GM10248 (cell line): ENCODE measurements at regions of chr2 and their contacts with region 1.

Region 1: DNA sequence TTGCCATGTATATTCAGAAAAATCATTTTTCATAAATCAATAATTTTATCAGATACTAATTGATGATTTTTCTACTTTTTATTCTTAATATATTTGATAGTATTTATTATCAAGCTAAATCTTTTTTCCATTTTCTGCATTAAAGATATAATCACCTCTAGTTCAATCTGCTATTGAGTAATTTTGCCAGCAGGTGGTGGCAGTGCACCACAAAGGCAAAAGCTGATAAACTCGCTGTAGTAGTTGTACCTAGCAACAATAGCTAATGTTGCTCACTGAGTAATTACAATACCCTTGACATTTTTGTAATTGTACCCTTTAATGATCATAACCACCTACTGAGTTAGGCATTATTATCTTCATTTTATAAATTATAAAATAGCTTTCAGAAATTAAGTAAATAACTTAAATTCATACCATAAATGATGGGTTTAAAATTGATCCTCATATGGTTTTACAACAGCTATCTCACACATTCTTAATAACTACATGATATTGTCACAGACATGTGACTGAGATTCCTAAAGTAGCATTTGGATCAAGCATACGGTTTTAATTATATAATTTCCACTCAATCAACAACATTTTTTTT is 52.0 kb upstream of the CALCRL start:
- DNase-seq: peak; percentile 26
- CTCF ChIP-seq: peak; percentile 80

Region 2: DNA sequence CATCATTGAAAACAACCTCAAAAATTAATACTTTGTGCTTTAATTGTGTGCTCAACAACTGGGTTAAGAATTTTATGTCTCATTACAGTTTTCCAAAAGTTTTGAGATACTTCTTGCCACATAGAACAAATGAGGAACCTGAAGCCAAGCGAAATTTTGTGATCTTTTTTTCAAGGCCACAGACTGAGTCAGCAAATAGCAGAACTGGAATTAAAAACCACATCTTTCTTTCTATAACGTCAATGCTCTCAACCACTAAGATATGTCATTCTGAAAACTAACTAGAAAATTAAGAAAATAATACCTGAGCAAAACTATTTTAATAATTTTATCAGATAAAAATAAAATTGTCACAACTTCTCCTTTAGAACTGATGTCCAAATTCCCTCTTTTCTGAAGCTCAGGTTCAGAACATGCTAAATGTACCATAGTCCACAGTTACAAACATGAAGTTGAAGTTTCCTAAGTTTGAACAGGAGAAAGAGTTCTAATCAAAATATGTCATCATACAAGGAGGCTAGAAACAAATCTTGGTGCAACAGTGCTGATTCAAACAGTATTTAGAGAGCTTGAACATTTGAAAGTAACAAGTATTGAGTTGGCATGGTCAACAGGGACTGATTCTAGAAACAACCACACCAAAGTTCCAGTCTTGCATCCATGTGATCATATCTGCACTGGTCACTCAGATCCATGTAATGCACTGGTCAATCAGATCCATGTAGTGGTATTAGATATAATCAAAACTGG is 24.4 kb before region 1 on chr2:
- CTCF ChIA-PET with region 1: interaction called, 10 read pairs
- POLR2A ChIA-PET with region 1: no interaction called
- DNase-seq: no peak
- CTCF ChIP-seq: no peak

Region 3: DNA sequence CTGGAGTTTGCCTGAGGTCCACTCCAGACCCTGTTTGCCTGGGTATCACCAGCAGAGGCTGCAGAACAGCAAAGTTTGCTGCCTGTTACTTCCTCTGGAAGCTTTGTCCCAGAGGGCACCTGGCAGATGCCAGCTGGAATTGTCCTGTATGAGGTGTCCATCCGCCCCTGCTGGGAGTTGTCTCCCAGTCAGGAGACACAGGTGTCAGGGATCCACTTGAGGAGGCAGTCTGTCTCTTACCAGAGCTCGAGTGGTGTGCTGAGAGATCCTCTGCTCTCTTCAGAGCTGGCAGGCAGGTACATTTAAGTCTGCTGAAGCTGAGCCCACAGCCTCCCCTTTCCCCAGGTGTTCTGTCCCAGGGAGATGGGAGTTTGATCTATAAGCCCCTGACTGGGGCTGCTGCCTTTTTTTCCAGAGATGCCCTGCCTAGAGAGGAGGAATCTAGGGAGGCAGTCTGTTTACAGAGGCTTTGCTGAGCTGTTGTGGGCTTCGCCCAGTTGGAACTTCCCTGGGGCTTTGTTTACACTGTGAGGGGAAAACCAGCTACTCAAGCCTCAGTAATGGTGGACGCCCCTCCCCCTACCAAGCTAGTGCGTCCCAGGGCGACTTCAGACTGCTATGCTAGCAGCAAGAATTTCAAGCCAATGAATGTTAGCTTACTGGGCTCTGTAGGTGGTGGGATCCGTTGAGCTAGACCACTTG is 19.5 kb after region 1 on chr2:
- CTCF ChIA-PET with region 1: interaction called, 16 read pairs
- POLR2A ChIA-PET with region 1: no interaction called
- DNase-seq: no peak
- CTCF ChIP-seq: no peak

Region 4: GRCh38 chr2:187594801-187595200 is 94.8 kb after region 1 on chr2:
- CTCF ChIA-PET with region 1: no interaction called
- POLR2A ChIA-PET with region 1: no interaction called
- DNase-seq: no peak
- CTCF ChIP-seq: no peak

Region 5: GRCh38 chr2:187842978-187843847 is 343.2 kb after region 1 on chr2:
- CTCF ChIA-PET with region 1: interaction called, 43 read pairs
- POLR2A ChIA-PET with region 1: no interaction called
- DNase-seq: peak; percentile 17
- CTCF ChIP-seq: peak; percentile 61